Activated CD4-positive, alpha-beta memory T cell treated with anti-CD3 and anti-CD28 coated beads, Interleukin-2, amount 10 ng/mL, durations not matched to agents 7 days and 5 days (primary cell): ENCODE measurements at regions of chr5 and their contacts with region 1.

Region 1: GRCh38 chr5:72816311-72817145 is at the start of gene TNPO1:
- DNase-seq: peak; percentile 84
- H3K4me3 Mint-ChIP-seq: peak within 1 kb of the TSS; percentile 90
- H3K27ac Mint-ChIP-seq: peak within 1 kb of the TSS; percentile 63
- H3K4me1 Mint-ChIP-seq: peaks cover 20% of the 10 kb centered on the region
- H3K27me3 Mint-ChIP-seq: peaks cover 19% of the 10 kb centered on the region
- total RNA-seq, gene TNPO1: 67.1 to 78.3 TPM

Region 2: DNA sequence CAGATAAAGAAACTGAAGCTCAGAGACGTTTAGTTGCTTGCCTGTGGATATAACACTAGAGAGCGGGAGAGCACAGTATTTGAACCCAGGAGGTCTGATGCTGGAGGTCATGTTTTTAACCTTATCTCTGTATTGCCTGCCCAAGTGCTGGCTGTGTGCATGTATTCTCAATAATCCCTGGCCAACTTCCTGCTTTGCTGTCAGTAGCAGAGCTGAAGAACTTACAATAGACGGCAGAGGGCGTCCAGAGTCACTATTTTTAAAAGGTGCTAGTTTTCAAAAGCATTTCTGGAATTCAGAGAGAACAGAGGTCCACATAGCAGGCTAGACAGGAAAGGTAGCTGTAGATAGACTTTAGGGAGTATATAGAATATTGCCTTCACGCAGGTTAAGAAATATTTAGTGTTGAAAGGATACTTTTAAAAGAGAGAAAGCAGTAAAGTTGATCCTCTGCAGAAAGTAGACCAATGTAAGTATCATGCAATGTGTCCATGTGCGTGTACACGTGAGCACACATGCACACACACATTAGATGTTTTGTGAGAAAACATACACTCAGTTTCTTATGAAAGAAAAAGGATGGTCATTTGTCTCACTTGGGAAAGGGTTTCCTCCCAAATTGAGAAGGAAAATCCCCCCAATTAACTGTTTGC is 450.1 kb before region 1 on chr5:
- CTCF ChIA-PET with region 1: interaction called, 10 read pairs
- POLR2A ChIA-PET with region 1: no interaction called
- DNase-seq: peak; percentile 37
- H3K4me3 Mint-ChIP-seq: no peak overlapping the region
- H3K27ac Mint-ChIP-seq: no peak overlapping the region
- H3K4me1 Mint-ChIP-seq: no peaks in the 10 kb centered on the region
- H3K27me3 Mint-ChIP-seq: no peaks in the 10 kb centered on the region

Region 3: DNA sequence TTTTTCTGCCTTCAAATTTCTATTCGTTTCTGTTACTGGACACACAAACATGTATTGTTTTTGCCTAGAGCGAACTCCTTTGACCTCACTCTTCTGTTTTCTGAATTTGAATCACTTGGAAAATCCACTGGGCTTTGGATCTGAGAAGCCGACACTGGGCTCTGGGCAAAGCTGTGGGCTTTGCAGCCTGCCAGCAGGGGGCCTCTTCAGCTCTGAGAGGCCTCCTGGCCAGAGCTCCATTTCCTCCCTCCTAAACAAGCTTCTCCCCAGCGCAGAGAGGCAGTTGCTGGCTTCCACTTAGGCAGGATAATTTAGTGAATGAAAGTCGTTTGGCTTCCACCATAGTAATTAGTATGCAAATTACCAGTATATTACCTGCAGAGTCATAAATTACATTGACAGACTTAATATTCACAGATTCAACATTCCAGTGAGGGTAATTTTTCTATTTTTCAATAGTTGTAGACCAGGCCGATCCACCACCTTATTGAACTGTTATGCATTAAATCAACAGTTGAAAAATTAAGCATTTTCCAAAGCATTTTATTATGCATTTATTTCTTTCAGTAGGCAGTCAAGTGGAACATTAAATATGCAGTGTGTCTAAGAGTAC is 205.3 kb before region 1 on chr5:
- CTCF ChIA-PET with region 1: interaction called, 52 read pairs
- POLR2A ChIA-PET with region 1: interaction called, 4 read pairs
- DNase-seq: peak; percentile 38
- H3K4me3 Mint-ChIP-seq: no peak overlapping the region
- H3K27ac Mint-ChIP-seq: no peak overlapping the region
- H3K4me1 Mint-ChIP-seq: no peaks in the 10 kb centered on the region
- H3K27me3 Mint-ChIP-seq: peaks cover 15% of the 10 kb centered on the region

Region 4: GRCh38 chr5:72733810-72734209 is 82.7 kb before region 1 on chr5:
- CTCF ChIA-PET with region 1: no interaction called
- POLR2A ChIA-PET with region 1: no interaction called
- DNase-seq: no peak
- H3K4me3 Mint-ChIP-seq: no peak overlapping the region
- H3K27ac Mint-ChIP-seq: no peak overlapping the region
- H3K4me1 Mint-ChIP-seq: no peaks in the 10 kb centered on the region
- H3K27me3 Mint-ChIP-seq: peaks cover 10% of the 10 kb centered on the region

Region 5: DNA sequence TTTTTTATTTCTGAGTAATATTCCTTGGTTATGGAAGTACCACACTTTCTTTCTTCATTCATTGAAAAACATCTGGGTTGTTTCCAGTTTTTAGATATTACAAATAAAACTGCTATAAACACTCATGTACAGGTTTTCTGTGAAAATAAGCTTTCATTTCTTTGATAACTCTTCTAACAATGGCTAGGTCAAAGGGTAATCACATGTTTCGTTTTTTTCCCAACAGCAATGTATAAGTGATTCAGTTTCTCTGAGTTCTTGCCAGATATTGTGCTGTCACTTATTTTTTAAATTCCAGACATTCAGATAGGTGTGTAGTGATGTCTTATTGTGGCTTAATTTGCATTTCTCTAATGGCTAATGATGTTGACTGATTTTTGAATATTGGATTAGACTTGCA is 16.8 kb before region 1 on chr5:
- CTCF ChIA-PET with region 1: no interaction called
- POLR2A ChIA-PET with region 1: no interaction called
- DNase-seq: no peak
- H3K4me3 Mint-ChIP-seq: no peak overlapping the region
- H3K27ac Mint-ChIP-seq: no peak overlapping the region
- H3K4me1 Mint-ChIP-seq: no peaks in the 10 kb centered on the region
- H3K27me3 Mint-ChIP-seq: peaks cover 30% of the 10 kb centered on the region

Region 6: GRCh38 chr5:72841756-72842535 is 25.4 kb after region 1 on chr5:
- CTCF ChIA-PET with region 1: interaction called, 13 read pairs
- POLR2A ChIA-PET with region 1: interaction called, 59 read pairs
- DNase-seq: no peak
- H3K4me3 Mint-ChIP-seq: no peak overlapping the region
- H3K27ac Mint-ChIP-seq: no peak overlapping the region
- H3K4me1 Mint-ChIP-seq: peaks cover 2% of the 10 kb centered on the region
- H3K27me3 Mint-ChIP-seq: peaks cover 3% of the 10 kb centered on the region

Region 7: DNA sequence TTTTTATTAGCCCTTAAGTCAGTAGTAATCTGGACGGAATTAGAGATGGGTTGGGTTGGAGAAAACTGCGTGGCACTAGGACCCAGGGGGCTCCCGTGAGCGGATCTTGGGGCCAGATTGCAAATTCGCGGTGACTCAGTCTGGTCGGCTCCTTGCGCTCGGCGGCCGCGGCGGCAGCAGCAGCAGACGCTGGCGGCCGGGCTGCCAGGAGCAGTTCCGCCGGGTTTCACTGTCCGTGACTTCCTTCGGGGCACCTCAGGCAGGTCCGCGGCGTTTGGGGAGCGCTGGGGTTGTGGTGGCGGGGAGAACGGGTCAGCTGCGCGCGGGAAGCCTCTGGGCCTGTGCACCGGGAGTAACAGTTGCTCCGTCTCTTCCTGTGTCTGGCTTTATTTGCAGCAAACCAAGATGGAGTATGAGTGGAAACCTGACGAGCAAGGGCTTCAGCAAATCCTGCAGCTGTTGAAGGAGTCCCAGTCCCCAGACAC is 31.5 kb after region 1 on chr5:
- CTCF ChIA-PET with region 1: interaction called, 7 read pairs
- POLR2A ChIA-PET with region 1: interaction called, 59 read pairs
- DNase-seq: peak; percentile 88
- H3K4me3 Mint-ChIP-seq: peak overlapping the region; percentile 91
- H3K27ac Mint-ChIP-seq: peak overlapping the region; percentile 92
- H3K4me1 Mint-ChIP-seq: peaks cover 36% of the 10 kb centered on the region
- H3K27me3 Mint-ChIP-seq: peaks cover 2% of the 10 kb centered on the region

Region 8: GRCh38 chr5:72878854-72879253 is 62.3 kb after region 1 on chr5:
- CTCF ChIA-PET with region 1: no interaction called
- POLR2A ChIA-PET with region 1: no interaction called
- DNase-seq: no peak
- H3K4me3 Mint-ChIP-seq: no peak overlapping the region
- H3K27ac Mint-ChIP-seq: no peak overlapping the region
- H3K4me1 Mint-ChIP-seq: peaks cover 14% of the 10 kb centered on the region
- H3K27me3 Mint-ChIP-seq: no peaks in the 10 kb centered on the region